Cardiac septum (tissue), 1 donor: ENCODE measurements at regions of chr14 and their contacts with region 1.

Region 1: DNA sequence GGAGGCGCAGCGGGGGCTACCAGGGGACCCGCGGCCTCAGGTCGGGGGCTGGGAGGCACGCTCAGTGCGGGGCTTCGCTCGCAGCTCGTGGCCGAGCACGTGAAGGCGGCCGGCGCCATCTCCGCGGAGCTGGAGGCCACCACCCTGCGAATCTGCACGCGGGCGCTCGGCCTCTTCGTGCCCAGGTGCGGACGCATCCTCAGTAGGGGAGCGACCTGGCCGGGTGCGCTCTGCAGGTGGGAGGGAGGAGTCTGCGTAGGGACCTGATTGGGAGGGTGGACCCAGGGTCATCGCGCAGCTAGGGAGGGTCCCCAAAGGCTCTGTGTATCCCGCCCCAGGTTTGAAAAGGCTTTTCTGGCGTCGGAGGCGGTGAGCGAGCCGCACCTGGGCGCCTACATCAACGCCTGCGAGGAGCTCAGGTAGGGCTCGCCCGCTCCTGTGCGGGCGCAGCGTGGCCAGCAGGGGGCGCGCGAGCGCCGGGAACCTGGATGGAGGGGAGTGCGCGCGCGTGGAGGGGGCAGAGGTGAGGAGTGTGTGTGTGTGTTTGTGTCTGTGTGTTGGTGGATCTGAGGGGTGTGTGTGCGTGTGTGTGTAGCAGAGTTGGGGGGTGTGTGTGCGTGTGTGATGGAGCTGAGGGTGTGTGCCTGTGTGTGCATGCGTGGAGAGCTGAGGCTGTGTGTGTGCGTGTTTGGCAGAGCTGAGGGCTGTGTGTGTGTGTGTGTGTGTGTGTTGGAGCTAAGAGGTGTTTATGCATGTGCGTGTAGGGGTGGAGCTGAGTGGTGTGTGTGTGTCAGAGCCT is 10.3 kb downstream of the EXOC3L4 start:
- DNase-seq: peak; percentile 93

Region 2: GRCh38 chr14:102849526-102850379 is 255.1 kb before region 1 on chr14:
- intact Hi-C with region 1: no loop called
- DNase-seq: no peak

Region 3: DNA sequence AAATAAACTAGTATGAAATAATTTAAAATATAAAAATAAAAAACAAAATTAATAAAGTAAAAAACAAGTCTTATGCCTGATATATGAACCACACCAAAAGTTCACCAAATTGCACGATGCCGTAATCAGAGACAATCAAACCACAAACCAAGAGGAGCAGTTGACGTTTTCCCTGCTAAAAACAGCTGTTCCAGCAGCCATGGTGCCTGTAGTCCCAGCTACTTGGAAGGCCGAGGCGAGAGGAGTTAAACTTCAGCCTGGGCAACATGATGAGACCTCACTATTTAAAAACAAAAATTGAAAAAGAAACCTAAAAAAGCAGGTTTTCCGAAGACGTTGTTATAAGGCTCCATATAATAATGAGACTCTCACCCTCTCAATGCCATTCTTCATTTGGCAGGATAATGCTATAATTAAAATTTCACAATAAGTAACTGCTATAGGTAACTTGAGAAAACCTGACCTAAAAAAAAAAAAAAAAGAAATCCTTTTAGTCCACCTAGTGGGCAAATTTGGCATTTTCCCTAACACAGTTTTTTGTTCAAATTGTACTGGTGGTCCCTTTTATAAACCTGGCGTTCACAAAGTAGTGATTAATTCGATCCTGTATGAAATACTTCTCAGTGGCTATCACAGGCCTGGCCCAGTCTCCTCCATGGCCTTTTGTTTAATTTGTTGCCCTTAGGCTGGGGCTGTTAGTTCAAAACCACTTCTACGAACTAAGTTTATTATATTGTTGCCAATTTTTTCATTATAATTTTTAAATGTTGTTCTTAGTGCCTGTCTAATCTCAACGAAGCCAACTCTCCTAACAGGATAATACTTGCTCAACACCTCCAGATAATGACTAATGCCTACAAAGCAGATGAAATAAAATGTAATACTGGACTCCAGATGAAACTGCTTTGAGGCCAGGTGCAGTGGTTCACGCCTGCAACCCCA is 80.5 kb after region 1 on chr14:
- intact Hi-C with region 1: loop called (anchors 5 kb)
- DNase-seq: no peak